Activated CD4-positive, alpha-beta T cell treated with anti-CD3 and anti-CD28 coated beads, Interleukin-2, amount 10 ng/mL, durations not matched to agents 24 days and 14 days (primary cell): ENCODE measurements at regions of chr11 and their contacts with region 1.

Region 1: GRCh38 chr11:133082851-133083488 is 449.3 kb downstream of the OPCML start:
- DNase-seq: peak; percentile 92
- H3K4me3 Mint-ChIP-seq: peak overlapping the region; percentile 62
- H3K27ac Mint-ChIP-seq: no peak overlapping the region
- H3K4me1 Mint-ChIP-seq: peaks cover 2% of the 10 kb centered on the region
- H3K27me3 Mint-ChIP-seq: peaks cover 24% of the 10 kb centered on the region

Region 2: GRCh38 chr11:133163463-133164419 is 80.8 kb after region 1 on chr11:
- intact Hi-C with region 1: loop called (anchors 5 kb)
- DNase-seq: peak; percentile 68
- H3K4me3 Mint-ChIP-seq: no peak overlapping the region
- H3K27ac Mint-ChIP-seq: no peak overlapping the region
- H3K4me1 Mint-ChIP-seq: no peaks in the 10 kb centered on the region
- H3K27me3 Mint-ChIP-seq: no peaks in the 10 kb centered on the region

Region 3: DNA sequence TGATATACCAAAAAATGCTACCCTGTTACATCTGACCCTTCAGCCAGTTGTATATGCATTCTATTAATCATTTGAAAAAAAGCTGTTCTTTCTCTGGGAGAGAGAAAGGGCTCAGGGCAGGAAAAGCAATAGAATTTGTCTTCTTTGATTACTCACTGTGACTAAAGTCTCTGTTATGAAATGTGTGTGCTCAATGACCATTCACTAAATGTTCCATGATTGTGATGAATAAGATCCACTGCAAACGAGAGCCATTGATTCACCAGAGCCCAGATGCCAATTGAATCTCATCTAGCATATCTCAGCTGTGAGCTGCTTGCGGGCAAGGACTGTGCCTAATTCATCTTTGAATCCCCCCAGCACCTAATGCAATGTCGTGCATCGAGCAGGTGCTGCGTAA is 265.0 kb after region 1 on chr11:
- intact Hi-C with region 1: no loop called
- DNase-seq: no peak
- H3K4me3 Mint-ChIP-seq: no peak overlapping the region
- H3K27ac Mint-ChIP-seq: no peak overlapping the region
- H3K4me1 Mint-ChIP-seq: no peaks in the 10 kb centered on the region
- H3K27me3 Mint-ChIP-seq: no peaks in the 10 kb centered on the region

Region 4: DNA sequence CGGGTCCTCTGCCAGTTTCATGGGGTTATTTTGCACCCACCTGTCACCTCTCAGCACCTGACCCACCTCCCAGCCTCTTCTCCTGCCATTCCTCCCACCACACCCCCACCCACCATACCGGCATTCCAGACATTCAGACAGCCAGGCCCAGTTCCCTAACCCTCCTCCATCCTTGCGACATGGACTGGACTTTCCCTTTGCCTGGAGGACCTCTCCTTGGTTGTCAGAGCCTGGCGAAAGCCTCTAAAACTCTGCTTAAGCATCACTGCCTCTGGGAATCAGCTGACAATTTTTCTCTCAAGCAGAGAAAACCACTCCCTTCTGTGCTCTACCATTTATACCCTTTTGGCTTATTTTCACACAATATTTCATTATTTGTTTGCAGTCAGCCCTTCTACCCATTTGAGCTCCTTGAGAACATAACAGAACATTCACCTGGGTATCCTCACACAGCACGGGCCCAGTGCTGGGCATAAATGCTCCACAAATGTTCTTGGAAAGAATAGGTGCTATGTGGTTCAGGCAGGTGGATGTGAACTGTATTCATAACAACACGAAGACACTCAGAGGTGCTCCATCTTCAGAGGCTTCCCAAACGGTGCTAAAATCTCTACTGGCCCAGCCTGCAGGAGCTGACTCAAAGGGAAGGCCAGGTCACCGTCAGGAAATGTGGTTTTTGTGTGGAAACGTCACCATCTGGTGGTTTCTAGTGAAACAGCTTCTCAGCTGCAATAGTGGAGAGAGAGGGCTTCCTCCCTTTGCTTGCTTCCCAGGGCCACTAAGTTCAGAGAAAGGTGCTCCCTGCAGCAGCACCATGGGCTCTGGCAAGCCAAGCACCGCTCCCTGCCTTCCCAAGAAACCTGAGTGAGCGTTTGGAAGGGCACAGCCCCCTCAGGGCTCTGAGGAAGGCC is 752.0 kb after region 1 on chr11:
- intact Hi-C with region 1: loop called (anchors 2 kb)
- DNase-seq: peak; percentile 89
- H3K4me3 Mint-ChIP-seq: no peak overlapping the region
- H3K27ac Mint-ChIP-seq: peak overlapping the region; percentile 55
- H3K4me1 Mint-ChIP-seq: peaks cover 4% of the 10 kb centered on the region
- H3K27me3 Mint-ChIP-seq: no peaks in the 10 kb centered on the region